ENCODE measurements at regions of chr10 and their contacts with region 1.

Region 1: GRCh38 chr10:103491493-103492381 is 1.8 kb upstream of the NEURL1 start:
- DNase-seq: peak; percentile 38
- H3K4me3 ChIP-seq: no peak overlapping the region
- H3K27ac ChIP-seq: no peak overlapping the region
- H3K4me1 ChIP-seq: peaks cover 11% of the 10 kb centered on the region
- H3K27me3 ChIP-seq: peaks cover 17 to 33% of the 10 kb centered on the region in 2 experiments
- CTCF ChIP-seq: no peak
- POLR2A ChIP-seq: no peak

Region 2: DNA sequence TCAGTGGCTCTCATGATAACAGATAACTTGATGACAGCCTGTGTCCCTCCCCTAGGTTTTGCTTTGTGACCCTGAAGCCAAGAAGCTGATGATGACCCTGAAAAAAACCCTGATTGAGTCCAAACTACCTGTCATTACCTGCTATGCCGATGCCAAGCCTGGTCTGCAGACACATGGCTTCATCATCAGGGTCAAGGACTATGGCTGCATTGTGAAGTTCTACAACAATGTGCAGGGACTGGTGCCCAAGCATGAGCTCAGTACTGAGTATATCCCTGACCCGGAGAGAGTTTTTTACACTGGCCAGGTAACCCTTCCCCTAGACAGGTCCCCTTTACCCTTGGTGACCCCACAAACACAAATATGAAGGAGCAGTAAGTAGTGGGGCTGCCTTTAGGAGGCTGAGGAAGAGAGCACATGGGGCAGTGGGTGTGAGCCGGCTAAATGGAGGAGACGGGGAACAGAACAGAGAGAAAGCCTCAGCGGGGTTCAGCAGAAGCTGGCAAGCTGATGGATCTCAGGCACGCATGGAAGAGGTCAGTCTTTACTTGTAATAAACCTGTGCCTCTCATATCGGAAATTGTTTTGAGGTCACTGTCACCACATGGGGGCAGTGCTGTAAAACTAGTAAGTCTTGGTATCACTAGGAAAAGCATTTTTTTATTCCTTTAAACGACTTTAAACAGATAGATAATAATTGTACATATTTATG is 75.1 kb before region 1 on chr10:
- CTCF ChIA-PET with region 1: interaction called, 45 read pairs
- POLR2A ChIA-PET with region 1: no interaction called
- dilution Hi-C with region 1: no loop called
- intact Hi-C with region 1: no loop called
- DNase-seq: peak; percentile 70
- H3K4me3 ChIP-seq: no peak overlapping the region
- H3K27ac ChIP-seq: no peak overlapping the region
- H3K4me1 ChIP-seq: no peaks in the 10 kb centered on the region
- H3K27me3 ChIP-seq: no peaks in the 10 kb centered on the region
- CTCF ChIP-seq: peak; percentile 36 to 40
- POLR2A ChIP-seq: no peak

Region 3: GRCh38 chr10:103451831-103452505 is 39.8 kb before region 1 on chr10 and contains the start of gene CALHM2:
- CTCF ChIA-PET with region 1: no interaction called
- POLR2A ChIA-PET with region 1: no interaction called
- dilution Hi-C with region 1: no loop called
- intact Hi-C with region 1: no loop called
- DNase-seq: peak; percentile 57
- H3K4me3 ChIP-seq: peak within 1 kb of the TSS; percentile 8 to 66 (median 55)
- H3K27ac ChIP-seq: peak within 1 kb of the TSS; percentile 57
- H3K4me1 ChIP-seq: peaks cover 38% of the 10 kb centered on the region
- H3K27me3 ChIP-seq: no peaks in the 10 kb centered on the region
- CTCF ChIP-seq: no peak
- POLR2A ChIP-seq: no peak
- total RNA-seq, gene CALHM2: 28.4 and 32.1 TPM in 2 replicates

Region 4: DNA sequence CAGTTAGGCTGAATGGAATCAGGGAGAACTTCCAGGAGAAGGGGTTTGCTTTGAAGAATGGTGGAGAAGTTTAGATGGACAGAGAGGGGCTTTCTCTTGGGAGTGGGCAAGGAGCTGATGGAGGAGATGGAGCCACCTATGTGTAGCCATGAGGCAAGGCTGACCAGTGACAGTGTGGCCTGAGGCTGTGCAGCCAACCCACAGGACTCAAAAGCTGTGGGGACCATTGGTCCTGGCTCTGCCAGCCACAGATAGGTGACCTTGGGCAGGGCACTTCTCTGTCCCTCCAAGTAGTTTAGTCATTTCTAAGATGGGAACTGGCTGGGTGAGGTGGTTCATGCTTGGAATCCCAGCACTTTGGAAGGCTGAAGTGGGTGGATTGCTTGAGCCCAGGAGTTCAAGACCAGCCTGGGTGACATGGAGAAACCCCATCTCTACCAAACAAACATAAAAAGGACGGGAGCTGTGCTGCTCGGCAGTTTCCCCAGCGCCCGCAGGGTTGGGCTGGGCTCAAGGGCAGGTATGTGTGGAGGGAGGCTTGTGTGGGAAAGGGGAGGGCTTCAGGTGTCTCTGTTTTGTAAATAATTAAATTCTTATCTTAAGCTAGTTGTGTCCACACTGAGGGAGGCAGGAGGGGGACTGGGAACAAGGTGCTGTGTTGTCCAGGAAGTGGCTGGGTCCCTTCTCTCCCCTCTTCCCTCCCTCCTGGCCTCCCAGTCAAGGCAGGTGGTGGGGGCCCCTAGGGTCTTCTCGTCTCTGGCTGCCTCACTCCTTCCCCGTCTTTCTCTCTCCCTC is 20.7 kb after region 1 on chr10:
- CTCF ChIA-PET with region 1: no interaction called
- POLR2A ChIA-PET with region 1: no interaction called
- dilution Hi-C with region 1: no loop called
- intact Hi-C with region 1: no loop called
- DNase-seq: no peak
- H3K4me3 ChIP-seq: no peak overlapping the region
- H3K27ac ChIP-seq: no peak overlapping the region
- H3K4me1 ChIP-seq: peaks cover 8% of the 10 kb centered on the region
- H3K27me3 ChIP-seq: peaks cover 0 to 2% of the 10 kb centered on the region in 2 experiments
- CTCF ChIP-seq: no peak
- POLR2A ChIP-seq: no peak

Measured in endothelial cell of umbilical vein (primary cell).